MCF 10A (cell line): ENCODE measurements at regions of chr4 and their contacts with region 1.

Region 1: GRCh38 chr4:1266881-1267763 is 18.2 kb upstream of the CTBP1 start:
- DNase-seq: no peak
- H3K4me3 Mint-ChIP-seq: no peak overlapping the region
- H3K27ac Mint-ChIP-seq: no peak overlapping the region
- H3K4me1 Mint-ChIP-seq: no peaks in the 10 kb centered on the region
- H3K27me3 Mint-ChIP-seq: peaks cover 2% of the 10 kb centered on the region
- CTCF ChIP-seq: no peak

Region 2: DNA sequence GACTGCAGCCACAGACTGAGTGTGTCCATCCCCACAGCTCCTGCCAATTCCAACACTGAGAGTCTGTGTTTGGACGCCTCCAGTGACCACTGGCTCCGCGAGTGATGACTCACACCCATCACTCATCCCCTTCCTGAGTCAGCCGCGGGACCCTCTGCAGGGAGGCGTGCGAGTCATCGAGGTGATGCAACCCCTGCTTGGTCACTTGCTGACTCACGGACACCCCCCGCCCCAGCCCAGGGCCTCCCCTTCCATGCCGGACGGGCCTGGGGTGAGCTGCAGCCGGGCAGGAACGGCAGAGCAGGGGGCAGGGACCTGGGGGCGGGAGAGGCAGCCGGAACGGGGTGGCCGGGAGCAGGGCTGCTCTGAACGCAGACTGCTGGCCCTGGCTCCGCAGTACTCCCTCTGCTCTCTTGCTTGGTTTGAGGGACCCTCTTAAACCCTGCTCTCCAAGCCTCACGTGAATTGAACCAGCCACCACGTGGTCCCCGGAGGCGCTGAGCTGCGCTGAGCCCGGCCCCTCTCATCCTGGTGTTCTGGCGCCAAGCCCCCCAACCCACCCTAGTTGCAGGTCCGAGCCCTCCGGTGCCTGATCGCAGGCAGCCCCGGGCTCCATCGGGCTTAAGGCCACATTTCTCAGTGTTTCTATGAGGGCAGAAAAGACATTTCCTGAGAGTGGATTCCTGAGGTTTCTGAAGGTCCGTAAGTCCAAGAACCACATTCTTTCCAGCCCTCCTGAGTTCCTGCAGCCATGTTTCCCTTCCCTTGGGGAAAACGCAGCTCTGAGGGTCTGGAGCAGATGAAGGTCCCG is 223.3 kb before region 1 on chr4:
- CTCF ChIA-PET with region 1: no interaction called
- POLR2A ChIA-PET with region 1: no interaction called
- intact Hi-C with region 1: loop called (anchors 1 kb)
- DNase-seq: peak; percentile 100
- H3K4me3 Mint-ChIP-seq: no peak overlapping the region
- H3K27ac Mint-ChIP-seq: no peak overlapping the region
- H3K4me1 Mint-ChIP-seq: peaks cover 18% of the 10 kb centered on the region
- H3K27me3 Mint-ChIP-seq: no peaks in the 10 kb centered on the region
- CTCF ChIP-seq: no peak

Region 3: DNA sequence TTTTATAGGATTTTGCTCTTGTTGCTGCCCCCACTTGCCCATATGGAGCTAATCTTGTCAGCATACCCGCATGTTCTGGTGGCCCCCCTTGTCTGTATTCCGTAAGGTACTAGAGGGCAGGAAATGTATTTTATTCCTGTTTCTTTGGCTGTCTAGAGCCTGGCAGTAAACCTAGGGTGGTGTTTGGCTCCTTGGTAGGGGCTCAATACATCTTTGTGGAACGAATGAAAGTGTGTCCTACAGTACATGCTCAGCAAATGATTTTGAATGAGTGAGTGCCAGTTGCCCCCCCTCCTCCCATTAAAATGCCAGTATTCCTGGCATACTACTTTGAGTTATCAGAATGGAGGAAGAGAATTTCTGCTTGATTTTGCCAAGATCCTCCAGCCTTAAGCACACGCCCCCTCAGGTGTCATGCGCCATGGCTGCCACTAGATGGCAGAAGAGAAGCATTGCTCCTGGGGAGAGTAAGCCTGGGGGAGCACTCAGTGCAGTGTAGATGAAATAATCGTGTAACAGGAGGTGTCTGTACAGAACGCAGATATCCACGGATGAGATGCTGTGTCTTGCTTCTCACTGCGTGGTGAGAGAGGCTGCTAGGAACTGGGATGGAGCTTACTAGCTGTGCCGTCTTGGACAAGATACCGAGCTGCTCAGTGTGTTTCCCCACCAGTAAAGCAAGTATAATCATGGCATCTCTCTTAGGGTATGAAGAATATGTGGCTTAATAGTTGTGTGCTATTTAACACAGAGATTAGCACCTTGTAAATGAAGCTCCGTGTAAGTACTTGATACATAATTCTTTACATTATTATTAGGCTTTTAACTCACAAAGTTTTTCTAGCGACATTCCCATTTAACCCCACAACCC is 136.6 kb before region 1 on chr4:
- CTCF ChIA-PET with region 1: interaction called, 36 read pairs
- POLR2A ChIA-PET with region 1: interaction called, 4 read pairs
- intact Hi-C with region 1: loop called (anchors 1 kb)
- DNase-seq: peak; percentile 79
- H3K4me3 Mint-ChIP-seq: no peak overlapping the region
- H3K27ac Mint-ChIP-seq: no peak overlapping the region
- H3K4me1 Mint-ChIP-seq: no peaks in the 10 kb centered on the region
- H3K27me3 Mint-ChIP-seq: peaks cover 47% of the 10 kb centered on the region
- CTCF ChIP-seq: peak; percentile 99